ENCODE measurements at regions of chr1 and their contacts with region 1.

Region 1: GRCh38 chr1:3910857-3911845 is 11.1 kb upstream of the C1orf174 start:
- DNase-seq: peak; percentile 48 to 83 (median 64)
- H3K4me3 ChIP-seq: peak overlapping the region in 16 of 59 donors; percentile 7 to 39 (median 22)
- H3K27ac ChIP-seq: no peak overlapping the region
- H3K27me3 ChIP-seq: peaks cover 0 to 10% (median 0%) of the 10 kb centered on the region in 45 donors
- CTCF ChIP-seq: peak; percentile 45 to 83 (median 69)

Region 2: GRCh38 chr1:4825800-4826450 is 914.8 kb after region 1 on chr1:
- intact Hi-C with region 1: loop called in 1 of 2 experiments (anchors 10 kb)
- DNase-seq: peak in 3 of 10 donors; percentile 14 to 54 (median 49)
- H3K4me3 ChIP-seq: no peak overlapping the region
- H3K27ac ChIP-seq: no peak overlapping the region
- H3K27me3 ChIP-seq: no peaks in the 10 kb centered on the region
- CTCF ChIP-seq: peak in 54 of 56 donors; percentile 44 to 78 (median 61)